Panc1 (cell line): ENCODE measurements at regions of chr5 and their contacts with region 1.

Region 1: GRCh38 chr5:172897481-172898217 is 61.6 kb upstream of the RPL26L1 start:
- DNase-seq: no peak
- ATAC-seq: peak; percentile 46
- H3K4me3 ChIP-seq: peak overlapping the region in 1 of 2 experiments; percentile 5; a peak in 1 of 4 replicates
- H3K27ac ChIP-seq: peak overlapping the region; percentile 80
- H3K4me1 ChIP-seq: peaks cover 39% of the 10 kb centered on the region
- H3K27me3 ChIP-seq: no peaks in the 10 kb centered on the region
- CTCF ChIP-seq: no peak

Region 2: GRCh38 chr5:172114875-172115422 is 782.7 kb before region 1 on chr5:
- CTCF ChIA-PET with region 1: no interaction called
- POLR2A ChIA-PET with region 1: no interaction called
- in situ Hi-C with region 1: no loop called
- intact Hi-C with region 1: no loop called
- DNase-seq: no peak
- ATAC-seq: no peak
- H3K4me3 ChIP-seq: no peak overlapping the region
- H3K27ac ChIP-seq: no peak overlapping the region
- H3K4me1 ChIP-seq: peaks cover 11% of the 10 kb centered on the region
- H3K27me3 ChIP-seq: no peaks in the 10 kb centered on the region
- CTCF ChIP-seq: no peak

Region 3: DNA sequence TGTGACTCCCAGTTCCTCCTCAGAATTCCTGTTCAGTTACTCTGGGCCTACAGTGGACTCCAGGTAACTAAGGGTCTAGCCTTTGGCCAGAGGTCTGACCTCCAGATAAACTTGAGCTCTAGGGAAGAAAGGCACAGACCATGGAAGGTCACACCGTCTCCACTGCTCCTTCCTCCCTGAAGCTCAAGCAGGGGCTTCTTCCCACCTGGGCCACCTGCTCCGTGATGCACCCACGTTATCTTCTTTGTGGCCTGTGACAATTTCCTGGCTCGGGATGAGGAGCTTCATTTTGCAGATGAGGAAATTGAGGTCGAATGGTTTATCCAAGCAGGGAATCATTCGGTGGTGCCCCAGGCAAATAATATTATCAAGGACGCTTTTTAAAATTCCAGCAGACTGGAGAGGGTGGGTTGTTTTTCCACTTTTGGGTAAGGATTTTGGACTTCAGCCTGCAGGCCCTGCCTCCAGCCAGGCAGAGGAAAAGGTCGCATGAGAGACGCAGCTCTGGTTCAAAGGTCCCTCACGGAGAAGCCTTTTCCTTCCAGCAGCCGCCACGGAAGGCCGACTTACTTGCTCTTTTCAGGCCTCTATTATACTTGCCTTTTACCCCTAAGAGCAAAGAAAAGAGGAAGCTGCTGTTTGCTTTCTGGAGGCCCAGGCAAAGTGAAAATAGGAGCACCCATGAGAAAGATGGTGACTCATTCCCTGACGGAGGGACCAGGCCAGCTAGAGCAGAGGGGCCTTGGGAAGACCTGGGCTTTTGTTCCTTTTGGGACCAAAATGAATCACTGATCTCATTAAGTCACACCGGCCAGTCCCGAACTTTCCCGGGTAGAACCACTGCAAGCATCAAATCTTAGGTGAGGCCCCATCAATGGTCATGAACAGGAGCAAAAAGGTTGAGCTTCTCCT is 103.8 kb before region 1 on chr5:
- CTCF ChIA-PET with region 1: no interaction called
- POLR2A ChIA-PET with region 1: interaction called, 16 read pairs
- in situ Hi-C with region 1: no loop called
- intact Hi-C with region 1: no loop called
- DNase-seq: no peak
- ATAC-seq: no peak
- H3K4me3 ChIP-seq: no peak overlapping the region
- H3K27ac ChIP-seq: peak overlapping the region; percentile 63
- H3K4me1 ChIP-seq: peaks cover 52% of the 10 kb centered on the region
- H3K27me3 ChIP-seq: no peaks in the 10 kb centered on the region
- CTCF ChIP-seq: no peak